Dendritic cell treated with granulocyte-macrophage colony-stimulating factor and Interleukin-4, amounts not matched to agents 40 ng/mL and 50 ng/mL, for 4 days (primary cell): ENCODE measurements at regions of chr15 and their contacts with region 1.

Region 1: GRCh38 chr15:89556413-89557262 is 18.6 kb upstream of the TICRR start:
- H3K4me3 Mint-ChIP-seq: no peak overlapping the region
- H3K27ac Mint-ChIP-seq: no peak overlapping the region
- H3K4me1 Mint-ChIP-seq: peaks cover 6% of the 10 kb centered on the region
- H3K27me3 Mint-ChIP-seq: peaks cover 24% of the 10 kb centered on the region

Region 2: DNA sequence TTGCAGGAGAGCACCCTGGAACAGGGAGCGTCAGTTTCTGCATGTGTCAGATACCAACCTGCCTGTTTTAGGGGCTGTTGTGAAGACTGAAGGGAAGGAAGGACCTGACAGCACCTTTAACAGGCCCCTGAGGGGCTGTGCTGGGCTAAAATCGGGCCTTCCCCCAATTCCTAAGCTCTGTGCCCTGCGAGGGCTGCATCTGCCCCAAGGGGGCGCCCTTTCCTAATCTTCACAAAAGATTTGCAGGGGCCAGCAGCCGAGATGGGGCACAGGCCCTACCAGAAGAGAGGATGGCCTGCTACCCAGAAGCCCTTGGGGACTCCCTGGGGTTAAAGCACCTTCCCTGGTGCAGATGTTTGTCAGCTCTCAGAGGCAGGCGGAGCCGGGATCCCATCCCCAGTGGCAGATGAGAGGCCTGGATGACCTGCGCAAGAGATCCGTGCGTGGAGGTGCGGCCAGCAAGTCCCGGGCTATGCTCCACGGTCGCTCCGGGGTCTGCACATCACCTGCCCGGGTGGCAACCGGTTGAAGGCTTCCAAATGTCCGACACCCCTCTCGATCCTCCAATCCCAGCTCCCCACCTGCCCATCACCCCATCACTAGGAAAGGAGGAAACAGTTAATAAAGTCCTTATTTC is 113.8 kb before region 1 on chr15:
- intact Hi-C with region 1: loop called (anchors 5 kb)
- H3K4me3 Mint-ChIP-seq: no peak overlapping the region
- H3K27ac Mint-ChIP-seq: no peak overlapping the region
- H3K4me1 Mint-ChIP-seq: peaks cover 15% of the 10 kb centered on the region
- H3K27me3 Mint-ChIP-seq: peaks cover 27% of the 10 kb centered on the region

Region 3: GRCh38 chr15:89496155-89497098 is 60.2 kb before region 1 on chr15 and contains the start of gene RHCG:
- intact Hi-C with region 1: loop called (anchors 2 kb)
- H3K4me3 Mint-ChIP-seq: peak within 1 kb of the TSS; percentile 73
- H3K27ac Mint-ChIP-seq: no peak within 1 kb of the TSS
- H3K4me1 Mint-ChIP-seq: peaks cover 11% of the 10 kb centered on the region
- H3K27me3 Mint-ChIP-seq: peaks cover 65% of the 10 kb centered on the region

Region 4: GRCh38 chr15:89591834-89592233 is 35.2 kb after region 1 on chr15:
- intact Hi-C with region 1: no loop called
- H3K4me3 Mint-ChIP-seq: no peak overlapping the region
- H3K27ac Mint-ChIP-seq: no peak overlapping the region
- H3K4me1 Mint-ChIP-seq: peaks cover 4% of the 10 kb centered on the region
- H3K27me3 Mint-ChIP-seq: no peaks in the 10 kb centered on the region

Region 5: DNA sequence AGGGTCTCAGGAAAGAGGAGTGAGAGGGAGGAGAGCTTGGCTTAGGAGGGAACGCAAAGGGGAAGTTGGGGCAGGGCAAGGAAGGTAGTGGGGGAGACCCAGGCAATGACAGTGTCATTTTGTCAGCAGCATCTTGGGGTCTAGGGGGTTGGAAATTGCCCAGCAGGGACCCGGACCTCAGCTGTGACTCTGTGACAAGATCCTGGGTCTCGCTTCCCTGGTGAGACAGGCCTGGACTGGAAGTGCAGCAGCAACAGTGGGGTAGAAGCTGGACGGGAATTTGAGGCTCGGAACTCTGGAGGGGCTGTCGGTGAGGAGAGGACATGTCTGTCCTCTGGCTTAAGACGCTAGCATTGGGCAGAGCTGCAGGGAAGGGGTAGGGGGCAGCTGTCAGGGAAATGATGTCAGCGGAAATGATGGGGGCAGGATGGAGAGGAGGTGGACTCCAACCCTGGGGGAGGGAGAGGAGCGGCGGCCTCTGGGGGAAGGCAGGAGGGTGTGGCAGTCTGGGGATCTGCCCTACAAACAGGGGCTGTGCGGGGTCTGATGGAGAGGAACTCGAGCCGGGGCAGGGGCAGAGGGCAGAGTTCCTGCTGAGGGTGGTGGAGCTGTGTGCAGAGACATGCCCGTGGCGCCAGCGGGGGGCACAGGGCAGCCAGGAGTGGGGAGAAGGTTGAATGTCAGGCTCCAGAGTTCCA is 245.7 kb after region 1 on chr15:
- intact Hi-C with region 1: no loop called
- H3K4me3 Mint-ChIP-seq: no peak overlapping the region
- H3K27ac Mint-ChIP-seq: peak overlapping the region; percentile 31
- H3K4me1 Mint-ChIP-seq: peaks cover 84% of the 10 kb centered on the region
- H3K27me3 Mint-ChIP-seq: no peaks in the 10 kb centered on the region